ENCODE measurements at regions of chr6 and their contacts with region 1.

Region 1: DNA sequence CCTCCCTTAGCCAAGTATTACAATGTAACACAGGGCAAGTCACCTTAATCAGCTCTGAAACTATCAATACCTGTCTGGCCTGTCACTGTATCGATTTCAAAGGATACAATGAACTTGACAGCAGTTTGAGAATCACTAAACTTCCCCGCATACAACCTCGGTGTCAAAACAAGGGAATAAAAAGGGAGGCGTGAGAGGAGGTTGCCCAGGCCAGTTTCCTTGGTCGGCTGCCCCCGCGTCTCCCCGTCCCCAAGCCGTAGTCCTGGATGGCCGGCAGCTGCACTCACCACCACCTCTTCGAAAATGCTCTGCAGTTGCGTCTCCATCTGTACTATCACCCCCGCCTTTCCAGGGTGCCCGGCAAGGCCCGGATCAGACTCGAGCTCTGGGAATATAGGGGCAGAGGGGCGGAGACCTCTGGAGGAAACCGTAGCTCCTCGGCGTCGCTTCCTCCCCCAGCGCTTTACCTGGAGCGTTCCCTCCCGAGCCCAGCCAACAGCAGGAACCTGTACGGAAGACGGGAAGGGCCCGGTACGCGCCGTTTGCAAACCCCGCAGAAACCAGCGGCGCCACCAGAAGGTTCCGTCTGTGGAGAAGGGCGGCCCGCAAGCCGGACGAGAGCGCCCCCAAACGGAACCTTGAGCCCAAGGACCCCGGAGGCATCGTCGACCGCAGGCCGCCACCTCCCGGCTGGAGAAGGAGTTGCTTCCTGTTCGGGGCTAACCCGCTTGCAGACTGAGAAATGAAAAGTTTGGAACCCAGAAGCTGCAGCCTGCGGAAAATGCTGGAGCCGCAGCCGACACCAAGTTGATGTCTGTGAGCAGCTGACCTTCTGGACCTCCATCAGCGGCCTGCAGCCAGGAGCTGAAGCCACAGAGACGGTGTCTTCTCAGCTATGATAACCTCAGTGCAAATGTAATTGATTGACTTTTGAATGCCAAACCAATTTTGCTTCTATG is at the start of gene MED23:
- DNase-seq: peak; percentile 96
- H3K4me3 ChIP-seq: peak within 1 kb of the TSS; percentile 72
- H3K27ac ChIP-seq: peak within 1 kb of the TSS; percentile 64
- H3K4me1 ChIP-seq: peaks cover 17% of the 10 kb centered on the region
- H3K27me3 ChIP-seq: no peaks in the 10 kb centered on the region
- CTCF ChIP-seq: peak; percentile 100
- total RNA-seq, gene MED23: 31.7 and 32.3 TPM in 2 replicates

Region 2: GRCh38 chr6:131167773-131168172 is 460.2 kb before region 1 on chr6:
- CTCF ChIA-PET with region 1: interaction called, 11 read pairs
- POLR2A ChIA-PET with region 1: no interaction called
- intact Hi-C with region 1: no loop called
- DNase-seq: peak; percentile 36
- H3K4me3 ChIP-seq: no peak overlapping the region
- H3K27ac ChIP-seq: no peak overlapping the region
- H3K4me1 ChIP-seq: peaks cover 9% of the 10 kb centered on the region
- H3K27me3 ChIP-seq: no peaks in the 10 kb centered on the region
- CTCF ChIP-seq: peak; percentile 44; the same call in 1 of the 2 replicates

Region 3: GRCh38 chr6:131205481-131206244 is 422.3 kb before region 1 on chr6:
- CTCF ChIA-PET with region 1: interaction called, 3 read pairs
- POLR2A ChIA-PET with region 1: interaction called, 3 read pairs
- intact Hi-C with region 1: loop called (anchors 5 kb)
- DNase-seq: no peak
- H3K4me3 ChIP-seq: no peak overlapping the region
- H3K27ac ChIP-seq: peak overlapping the region; percentile 59
- H3K4me1 ChIP-seq: peaks cover 60% of the 10 kb centered on the region
- H3K27me3 ChIP-seq: no peaks in the 10 kb centered on the region
- CTCF ChIP-seq: peak; percentile 47

Region 4: GRCh38 chr6:131615275-131615674 is 12.7 kb before region 1 on chr6:
- CTCF ChIA-PET with region 1: no interaction called
- POLR2A ChIA-PET with region 1: no interaction called
- intact Hi-C with region 1: no loop called
- DNase-seq: no peak
- H3K4me3 ChIP-seq: no peak overlapping the region
- H3K27ac ChIP-seq: no peak overlapping the region
- H3K4me1 ChIP-seq: no peaks in the 10 kb centered on the region
- H3K27me3 ChIP-seq: no peaks in the 10 kb centered on the region
- CTCF ChIP-seq: no peak

Measured in A673 (cell line).